Dendritic cell treated with granulocyte-macrophage colony-stimulating factor and Interleukin-4, amounts not matched to agents 40 ng/mL and 50 ng/mL, for 4 days (primary cell): ENCODE measurements at regions of chr2 and their contacts with region 1.

Region 1: DNA sequence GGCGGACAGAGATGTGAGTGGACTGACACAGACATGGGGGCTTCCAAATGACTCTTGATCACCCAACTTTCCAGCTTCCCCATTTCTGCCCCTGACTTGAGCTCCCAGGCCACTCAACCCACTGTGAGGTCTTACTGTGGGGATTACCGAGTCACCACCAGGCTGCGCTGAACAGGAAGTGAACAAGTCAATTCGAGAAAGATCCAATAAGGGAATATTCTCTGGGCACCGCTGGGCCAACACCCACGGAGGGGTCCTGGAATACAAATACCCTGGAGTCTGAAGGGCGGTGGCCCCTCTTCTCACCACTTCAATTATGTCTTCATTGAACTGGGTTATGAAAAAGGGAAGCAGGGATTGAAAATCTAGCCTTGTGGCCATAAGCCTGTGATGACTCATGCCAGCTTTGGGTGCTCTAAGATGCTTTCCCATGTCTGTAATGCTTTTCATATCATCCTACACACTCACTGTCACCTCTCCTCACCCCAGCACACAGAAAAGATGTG is 37.7 kb downstream of the BCL11A start:
- H3K4me3 Mint-ChIP-seq: peak overlapping the region; percentile 22
- H3K27ac Mint-ChIP-seq: peak overlapping the region; percentile 77
- H3K4me1 Mint-ChIP-seq: peaks cover 67% of the 10 kb centered on the region
- H3K27me3 Mint-ChIP-seq: no peaks in the 10 kb centered on the region

Region 2: DNA sequence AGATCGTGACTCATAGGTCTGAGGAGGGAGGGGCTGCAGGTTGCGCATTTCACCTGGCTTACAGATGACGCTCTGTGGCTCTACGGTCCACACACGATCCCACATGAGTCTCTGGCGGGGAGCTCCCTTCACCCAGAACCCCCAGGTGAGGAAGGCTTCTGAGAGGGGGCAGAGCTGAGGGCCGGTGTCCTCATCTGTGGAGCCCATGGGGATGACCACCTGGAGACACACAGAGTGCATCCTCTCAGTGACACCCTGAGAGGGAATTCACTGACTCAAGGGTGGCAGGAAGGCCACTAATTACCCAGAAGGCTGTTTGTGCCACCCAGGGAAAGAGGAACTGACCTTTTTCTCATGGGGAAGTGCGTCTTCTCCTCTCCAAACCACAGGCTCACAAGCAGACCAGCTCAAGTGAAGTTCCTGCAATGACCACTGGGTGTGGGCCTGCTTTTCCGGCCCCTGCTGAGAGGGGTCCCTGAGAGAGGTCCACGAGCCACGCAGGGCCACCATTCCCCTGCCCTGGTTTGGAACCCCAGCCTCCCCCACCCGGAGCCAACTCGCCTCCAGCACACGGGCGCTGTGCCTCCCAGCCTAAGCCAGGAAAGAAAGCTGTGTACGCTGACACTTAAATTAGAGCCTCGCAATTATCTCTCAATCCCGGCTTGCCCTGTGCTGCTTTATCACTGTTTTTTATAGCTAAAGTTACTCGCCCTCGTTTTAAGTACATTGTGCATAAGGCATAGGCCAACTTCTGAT is 76.4 kb before region 1 on chr2:
- intact Hi-C with region 1: loop called (anchors 1 kb)
- H3K4me3 Mint-ChIP-seq: peak overlapping the region; percentile 65
- H3K27ac Mint-ChIP-seq: peak overlapping the region; percentile 88
- H3K4me1 Mint-ChIP-seq: peaks cover 61% of the 10 kb centered on the region
- H3K27me3 Mint-ChIP-seq: no peaks in the 10 kb centered on the region

Region 3: DNA sequence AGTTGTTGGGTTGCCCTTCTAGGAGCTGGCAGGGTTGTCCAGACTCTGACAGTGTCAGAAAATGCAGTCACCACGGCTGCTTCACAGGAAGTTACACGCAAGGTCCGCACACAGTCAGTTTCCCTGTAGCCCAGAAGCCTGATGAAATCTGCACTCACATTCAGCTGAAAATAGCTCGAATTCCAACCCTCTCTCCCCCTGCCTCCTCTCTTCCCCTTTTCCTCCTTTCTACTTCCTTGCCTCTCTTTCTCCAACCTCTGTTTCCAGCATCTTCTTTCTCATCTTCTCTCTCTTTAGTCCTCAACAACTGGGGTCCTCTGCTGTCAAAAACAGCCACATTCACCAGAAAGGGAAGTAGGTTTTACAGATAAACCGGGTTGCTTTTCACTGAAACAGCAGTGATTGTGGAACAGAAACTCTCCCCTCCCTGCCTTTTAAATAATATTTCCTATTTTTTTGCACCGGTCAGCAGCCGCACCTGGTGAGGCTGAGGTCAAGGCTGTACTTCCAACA is 31.6 kb before region 1 on chr2:
- intact Hi-C with region 1: loop called (anchors 5 kb)
- H3K4me3 Mint-ChIP-seq: peak overlapping the region; percentile 69
- H3K27ac Mint-ChIP-seq: peak overlapping the region; percentile 89
- H3K4me1 Mint-ChIP-seq: peaks cover 75% of the 10 kb centered on the region
- H3K27me3 Mint-ChIP-seq: no peaks in the 10 kb centered on the region

Region 4: GRCh38 chr2:60525899-60526298 is 10.1 kb after region 1 on chr2:
- intact Hi-C with region 1: loop called (anchors 1 kb)
- H3K4me3 Mint-ChIP-seq: no peak overlapping the region
- H3K27ac Mint-ChIP-seq: no peak overlapping the region
- H3K4me1 Mint-ChIP-seq: peaks cover 68% of the 10 kb centered on the region
- H3K27me3 Mint-ChIP-seq: no peaks in the 10 kb centered on the region